Heart left ventricle (tissue), 16 donors: ENCODE measurements at regions of chr20 and their contacts with region 1.

Region 1: DNA sequence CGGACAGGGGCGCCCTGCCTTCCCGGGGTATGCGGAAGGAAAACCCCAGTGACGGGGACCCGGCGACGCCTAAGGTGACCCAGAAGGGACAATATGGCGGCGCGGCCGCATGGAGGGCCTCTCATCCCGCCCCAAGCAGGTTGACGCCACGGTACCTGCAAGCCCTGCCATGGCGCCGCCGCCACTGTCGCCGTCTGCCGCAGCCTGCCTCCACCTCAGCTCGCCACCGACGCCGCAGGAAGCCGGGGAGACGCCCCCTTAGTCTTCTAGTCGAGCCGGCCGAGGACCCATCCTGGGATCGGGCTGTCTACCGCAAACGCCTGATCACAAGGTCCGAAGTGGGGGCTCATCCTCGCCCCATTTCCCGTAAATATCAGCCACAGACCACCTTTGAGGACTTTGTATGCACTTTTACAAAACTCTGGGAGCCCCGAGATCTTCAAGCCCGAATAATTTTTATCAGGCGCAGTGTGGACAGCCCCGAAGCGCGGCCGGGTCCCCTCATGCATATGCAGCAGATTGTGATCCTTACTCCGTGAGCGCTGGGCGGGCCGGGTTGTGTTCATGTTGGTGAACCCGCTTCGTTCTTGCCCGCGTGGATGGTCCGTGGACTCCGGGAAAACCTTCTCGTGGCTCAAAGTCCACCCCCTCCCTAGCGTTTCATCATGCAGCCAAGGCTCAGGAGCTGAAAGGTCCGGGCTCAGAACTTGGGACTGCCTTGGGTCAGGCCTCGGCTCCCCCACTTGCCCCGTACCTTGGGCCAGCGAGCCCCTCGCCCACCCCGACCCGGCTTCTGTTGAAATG is at the start of gene BLCAP:
- DNase-seq: peak; percentile 90 to 96 (median 93)
- ATAC-seq: peak; percentile 86 to 93 (median 92)
- H3K4me3 ChIP-seq: peak within 1 kb of the TSS; percentile 76 to 100 (median 94)
- H3K27ac ChIP-seq: peak within 1 kb of the TSS; percentile 87 to 100 (median 98)
- H3K4me1 ChIP-seq: peaks cover 3 to 50% (median 40%) of the 10 kb centered on the region in 12 donors
- H3K27me3 ChIP-seq: no peaks in the 10 kb centered on the region
- CTCF ChIP-seq: no peak
- POLR2A ChIP-seq: peak; percentile 54 to 85
- total RNA-seq, gene BLCAP: 67.1 to 95.8 (median 81.7) TPM

Region 2: GRCh38 chr20:37192137-37192854 is 335.5 kb before region 1 on chr20:
- intact Hi-C with region 1: loop called in 4 of 10 experiments (anchors 2 to 5 kb)
- DNase-seq: peak; percentile 84 to 94 (median 89)
- ATAC-seq: peak; percentile 42 to 91 (median 90)
- H3K4me3 ChIP-seq: no peak overlapping the region
- H3K27ac ChIP-seq: no peak overlapping the region
- H3K4me1 ChIP-seq: peaks cover 0 to 54% (median 28%) of the 10 kb centered on the region in 12 donors
- H3K27me3 ChIP-seq: no peaks in the 10 kb centered on the region
- CTCF ChIP-seq: peak; percentile 81 to 98 (median 92)
- POLR2A ChIP-seq: no peak

Region 3: DNA sequence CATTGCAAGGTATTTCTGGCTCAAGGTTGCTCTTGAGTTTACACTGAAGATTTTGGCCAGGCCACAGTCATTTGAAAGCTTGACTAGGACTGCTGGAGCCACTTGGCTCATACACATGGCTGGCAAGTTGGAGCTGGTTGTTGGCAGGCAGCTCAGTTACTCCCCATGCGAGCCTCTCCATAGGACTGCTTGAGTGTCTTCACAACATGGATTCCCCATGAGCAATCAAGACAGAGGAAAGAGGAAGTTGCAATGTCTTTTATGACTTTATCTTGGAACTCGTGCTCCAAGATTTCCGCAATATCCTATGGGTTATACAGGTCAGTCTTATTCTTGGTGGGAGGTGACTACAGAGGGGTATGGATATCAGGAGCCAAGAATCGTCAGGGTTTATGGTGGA is 239.7 kb before region 1 on chr20:
- intact Hi-C with region 1: loop called in 1 of 10 experiments (anchors 5 kb)
- DNase-seq: no peak
- ATAC-seq: no peak
- H3K4me3 ChIP-seq: no peak overlapping the region
- H3K27ac ChIP-seq: peak overlapping the region in 1 of 12 donors; percentile 97
- H3K4me1 ChIP-seq: peaks cover 0 to 41% (median 9%) of the 10 kb centered on the region in 12 donors
- H3K27me3 ChIP-seq: no peaks in the 10 kb centered on the region
- CTCF ChIP-seq: no peak
- POLR2A ChIP-seq: no peak

Region 4: DNA sequence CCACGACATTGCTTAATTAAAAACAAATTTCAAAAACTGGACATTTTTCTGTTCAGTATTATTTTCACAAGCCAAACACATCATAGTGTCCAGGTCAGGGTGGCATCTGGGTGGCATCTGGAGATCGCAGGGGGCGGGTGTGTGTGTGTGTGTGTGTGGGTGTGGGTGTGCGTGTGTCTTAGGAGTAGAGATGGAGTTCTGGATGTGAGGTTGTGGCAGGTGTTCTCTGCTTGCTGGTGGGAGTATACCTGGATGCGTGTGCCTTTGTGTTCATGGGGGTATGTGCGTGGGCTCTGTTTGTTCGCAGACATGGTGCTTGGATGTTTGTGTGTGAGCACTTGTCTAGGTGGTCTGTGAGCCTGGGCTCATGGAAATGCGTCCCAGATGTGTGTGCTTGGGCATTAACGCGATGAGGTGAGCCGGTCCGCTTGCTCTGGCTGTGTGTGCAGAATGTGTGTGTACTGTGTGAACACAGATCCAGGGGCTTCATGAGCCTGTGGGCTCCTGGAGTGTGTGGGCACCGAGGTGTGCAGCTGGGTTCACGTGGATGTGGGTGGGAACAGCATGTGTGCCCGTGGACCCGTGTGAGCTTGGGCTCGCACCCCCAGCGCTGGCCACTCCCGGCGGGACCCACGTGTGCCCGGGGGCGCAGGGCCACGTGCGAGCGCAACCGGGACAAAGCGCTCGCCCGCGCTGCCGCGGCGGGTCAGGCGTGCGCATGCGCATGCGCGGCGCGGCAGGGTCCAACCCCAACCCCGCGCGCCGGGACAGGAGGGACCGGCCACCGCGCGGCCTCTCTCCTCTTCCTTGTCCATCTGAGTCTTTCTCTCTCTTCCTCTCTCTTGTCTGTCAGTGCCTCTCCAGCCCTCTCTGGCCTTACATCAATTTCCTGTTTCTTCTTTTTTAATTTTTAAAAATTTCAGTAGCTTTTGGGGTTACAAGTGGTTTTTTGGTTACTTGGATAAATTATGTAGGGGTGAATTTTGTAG is 121.5 kb before region 1 on chr20:
- intact Hi-C with region 1: loop called in 1 of 10 experiments (anchors 10 kb)
- DNase-seq: peak in 1 of 5 donors; percentile 58
- ATAC-seq: peak in 3 of 4 donors; percentile 26 to 77 (median 51)
- H3K4me3 ChIP-seq: peak overlapping the region in 8 of 12 donors; percentile 23 to 48 (median 32)
- H3K27ac ChIP-seq: no peak overlapping the region
- H3K4me1 ChIP-seq: peaks cover 0 to 22% (median 14%) of the 10 kb centered on the region in 12 donors
- H3K27me3 ChIP-seq: peaks cover 0 to 25% (median 13%) of the 10 kb centered on the region in 9 donors
- CTCF ChIP-seq: no peak
- POLR2A ChIP-seq: no peak

Region 5: GRCh38 chr20:37421988-37422387 is 105.9 kb before region 1 on chr20:
- intact Hi-C with region 1: no loop called
- DNase-seq: peak in 1 of 5 donors; percentile 17
- ATAC-seq: no peak
- H3K4me3 ChIP-seq: no peak overlapping the region
- H3K27ac ChIP-seq: no peak overlapping the region
- H3K4me1 ChIP-seq: no peaks in the 10 kb centered on the region
- H3K27me3 ChIP-seq: peaks cover 0 to 65% (median 13%) of the 10 kb centered on the region in 9 donors
- CTCF ChIP-seq: no peak
- POLR2A ChIP-seq: no peak